ENCODE measurements at regions of chr19 and their contacts with region 1.

Region 1: GRCh38 chr19:10380313-10381102 is at the start of gene TYK2:
- DNase-seq: peak; percentile 99
- H3K4me3 ChIP-seq: peak within 1 kb of the TSS; percentile 91
- H3K27ac ChIP-seq: peak within 1 kb of the TSS; percentile 69
- H3K4me1 ChIP-seq: peaks cover 8% of the 10 kb centered on the region
- H3K27me3 ChIP-seq: no peaks in the 10 kb centered on the region
- CTCF ChIP-seq: no peak
- total RNA-seq, gene TYK2: 76.3 to 148 TPM

Region 2: DNA sequence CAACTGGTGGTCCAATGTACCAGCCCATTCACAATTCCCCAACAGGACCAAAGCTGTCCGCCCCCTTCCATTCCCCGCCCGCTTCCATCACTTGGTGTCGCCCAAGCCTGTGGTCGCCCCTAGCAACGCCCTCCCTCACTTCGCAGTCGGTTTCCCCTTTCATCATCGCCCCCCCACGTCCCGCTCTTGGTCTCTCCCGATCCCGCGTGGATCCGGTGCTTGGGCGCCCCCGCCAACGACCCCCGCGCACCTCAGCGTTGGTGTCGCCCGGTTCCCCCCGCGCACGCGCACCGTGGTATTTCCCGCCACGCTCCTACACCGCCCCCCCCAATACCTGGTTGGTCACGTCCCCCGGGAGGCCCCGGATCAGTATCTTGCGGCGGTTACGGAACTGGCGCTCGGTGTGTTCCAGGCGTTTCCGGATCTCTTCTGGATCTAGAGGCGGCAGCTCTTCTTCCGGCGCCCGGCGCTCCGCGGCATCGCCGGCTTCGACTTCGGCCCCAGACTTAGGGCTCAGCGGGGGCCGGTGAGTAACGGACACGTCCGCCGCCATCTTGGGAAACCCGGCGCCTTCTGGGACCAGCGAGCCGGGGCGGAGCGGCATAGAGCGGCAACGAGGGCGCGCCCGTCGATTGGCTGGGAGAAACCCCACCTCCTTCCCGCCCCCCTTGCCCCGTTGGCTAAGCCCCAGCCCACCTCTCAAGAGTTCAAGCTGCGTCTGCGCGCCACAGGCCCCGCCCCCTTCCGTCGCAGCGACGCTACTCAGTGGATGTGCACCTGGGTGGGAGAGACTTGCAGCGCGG is 47.4 kb before region 1 on chr19 and contains the start of gene RAVER1:
- intact Hi-C with region 1: loop called (anchors 5 kb)
- DNase-seq: peak; percentile 98
- H3K4me3 ChIP-seq: peak within 1 kb of the TSS; percentile 85
- H3K27ac ChIP-seq: peak within 1 kb of the TSS; percentile 84
- H3K4me1 ChIP-seq: peaks cover 8% of the 10 kb centered on the region
- H3K27me3 ChIP-seq: no peaks in the 10 kb centered on the region
- CTCF ChIP-seq: no peak
- total RNA-seq, gene RAVER1: 67.1 to 101 TPM